PC-9 (cell line): ENCODE measurements at regions of chr6 and their contacts with region 1.

Region 1: GRCh38 chr6:128350416-128351254 is 169.8 kb downstream of the PTPRK start:
- DNase-seq: peak in 1 of 2 experiments; percentile 41
- H3K4me3 ChIP-seq: no peak overlapping the region
- H3K27ac ChIP-seq: no peak overlapping the region
- H3K4me1 ChIP-seq: no peaks in the 10 kb centered on the region
- H3K27me3 ChIP-seq: no peaks in the 10 kb centered on the region
- CTCF ChIP-seq: no peak

Region 2: DNA sequence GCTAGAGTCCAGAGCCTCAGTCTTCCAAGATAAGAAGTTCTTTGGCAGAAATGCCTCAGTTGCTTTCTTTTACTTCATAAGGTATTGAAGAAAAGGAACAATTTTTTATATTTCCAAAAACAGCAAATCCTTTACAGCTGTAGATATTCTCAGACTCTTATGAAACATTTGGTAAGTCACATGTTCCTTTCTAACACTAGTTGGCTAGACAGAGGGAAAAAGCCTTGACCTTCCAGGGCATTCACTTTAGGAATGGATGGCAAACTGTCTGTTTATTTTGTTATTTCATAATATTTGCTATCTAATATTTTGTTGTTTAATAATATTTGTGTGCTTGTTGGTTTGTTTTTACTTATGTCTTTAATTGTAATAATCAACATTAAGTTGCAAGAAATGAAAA is 28.9 kb after region 1 on chr6:
- CTCF ChIA-PET with region 1: no interaction called
- POLR2A ChIA-PET with region 1: interaction called, 12 read pairs
- intact Hi-C with region 1: no loop called
- DNase-seq: no peak
- H3K4me3 ChIP-seq: no peak overlapping the region
- H3K27ac ChIP-seq: no peak overlapping the region
- H3K4me1 ChIP-seq: no peaks in the 10 kb centered on the region
- H3K27me3 ChIP-seq: no peaks in the 10 kb centered on the region
- CTCF ChIP-seq: no peak